B cell (primary cell): ENCODE measurements at regions of chr7 and their contacts with region 1.

Region 1: DNA sequence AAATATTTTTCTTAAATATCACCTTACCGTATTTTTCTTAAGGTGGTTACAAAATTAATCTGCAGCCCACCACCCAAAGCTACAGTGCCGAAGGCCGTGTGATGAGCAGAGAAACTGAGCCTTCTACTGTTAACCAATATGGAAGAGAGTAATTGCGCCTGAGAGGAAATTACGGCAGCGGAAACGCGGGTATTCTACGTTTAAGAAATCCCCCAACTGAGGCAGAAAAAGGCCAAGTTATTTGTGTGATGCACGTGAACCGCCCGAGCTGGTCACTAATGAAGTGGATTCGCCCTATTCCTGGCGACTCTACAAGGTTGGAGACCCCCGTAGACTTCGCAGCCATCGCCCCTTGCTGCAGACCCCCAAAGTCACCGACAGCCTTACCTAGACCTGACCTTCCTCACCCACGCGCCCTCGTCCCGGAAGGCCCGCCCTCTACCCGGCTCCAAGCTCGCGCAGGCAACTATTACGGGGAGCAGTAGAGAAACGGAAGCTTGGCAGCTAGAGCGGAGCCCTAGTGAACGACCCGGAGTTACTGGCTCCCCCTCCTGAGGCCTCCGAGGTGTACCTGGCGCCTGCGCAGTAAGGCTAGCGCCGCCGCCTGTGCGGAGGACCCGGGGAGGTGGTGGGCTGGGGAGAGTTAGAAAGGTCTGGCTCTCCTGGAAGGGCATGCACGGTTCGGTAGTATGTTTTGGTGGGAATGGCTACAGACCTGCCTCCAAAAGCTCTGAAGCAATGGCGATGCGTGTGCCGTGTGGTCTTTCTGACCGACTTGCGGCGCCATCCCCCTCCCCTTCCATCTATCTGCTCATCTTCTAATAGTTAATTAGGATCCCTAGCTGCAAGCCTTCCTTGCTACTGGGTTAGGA is at the start of gene MRPS33:
- DNase-seq: peak; percentile 98
- ATAC-seq: peak; percentile 98
- H3K4me3 ChIP-seq: peak within 1 kb of the TSS; percentile 64 to 83 (median 74)
- H3K4me3 Mint-ChIP-seq: peak within 1 kb of the TSS; percentile 100
- H3K27ac ChIP-seq: peak within 1 kb of the TSS; percentile 96 to 99
- H3K27ac Mint-ChIP-seq: peak within 1 kb of the TSS; percentile 100
- H3K4me1 ChIP-seq: peaks cover 10 to 11% of the 10 kb centered on the region in 2 donors
- H3K4me1 Mint-ChIP-seq: peaks cover 27% of the 10 kb centered on the region
- H3K27me3 ChIP-seq: peaks cover 0 to 7% (median 0%) of the 10 kb centered on the region in 4 experiments
- H3K27me3 Mint-ChIP-seq: peaks cover 16% of the 10 kb centered on the region
- CTCF ChIP-seq: peak; percentile 69
- total RNA-seq, gene MRPS33: 25.3 and 30.1 TPM in 2 replicates

Region 2: GRCh38 chr7:140230861-140231770 is 783.6 kb before region 1 on chr7:
- CTCF ChIA-PET with region 1: no interaction called
- POLR2A ChIA-PET with region 1: no interaction called
- intact Hi-C with region 1: loop called (anchors 10 kb)
- DNase-seq: peak; percentile 69
- ATAC-seq: peak; percentile 10
- H3K4me3 ChIP-seq: peak overlapping the region; percentile 57 to 80 (median 64)
- H3K4me3 Mint-ChIP-seq: peak overlapping the region; percentile 90
- H3K27ac ChIP-seq: peak overlapping the region; percentile 93 to 96
- H3K27ac Mint-ChIP-seq: peak overlapping the region; percentile 99
- H3K4me1 ChIP-seq: peaks cover 49 to 74% of the 10 kb centered on the region in 2 donors
- H3K4me1 Mint-ChIP-seq: peaks cover 58% of the 10 kb centered on the region
- H3K27me3 ChIP-seq: no peaks in the 10 kb centered on the region
- H3K27me3 Mint-ChIP-seq: no peaks in the 10 kb centered on the region
- CTCF ChIP-seq: no peak

Region 3: DNA sequence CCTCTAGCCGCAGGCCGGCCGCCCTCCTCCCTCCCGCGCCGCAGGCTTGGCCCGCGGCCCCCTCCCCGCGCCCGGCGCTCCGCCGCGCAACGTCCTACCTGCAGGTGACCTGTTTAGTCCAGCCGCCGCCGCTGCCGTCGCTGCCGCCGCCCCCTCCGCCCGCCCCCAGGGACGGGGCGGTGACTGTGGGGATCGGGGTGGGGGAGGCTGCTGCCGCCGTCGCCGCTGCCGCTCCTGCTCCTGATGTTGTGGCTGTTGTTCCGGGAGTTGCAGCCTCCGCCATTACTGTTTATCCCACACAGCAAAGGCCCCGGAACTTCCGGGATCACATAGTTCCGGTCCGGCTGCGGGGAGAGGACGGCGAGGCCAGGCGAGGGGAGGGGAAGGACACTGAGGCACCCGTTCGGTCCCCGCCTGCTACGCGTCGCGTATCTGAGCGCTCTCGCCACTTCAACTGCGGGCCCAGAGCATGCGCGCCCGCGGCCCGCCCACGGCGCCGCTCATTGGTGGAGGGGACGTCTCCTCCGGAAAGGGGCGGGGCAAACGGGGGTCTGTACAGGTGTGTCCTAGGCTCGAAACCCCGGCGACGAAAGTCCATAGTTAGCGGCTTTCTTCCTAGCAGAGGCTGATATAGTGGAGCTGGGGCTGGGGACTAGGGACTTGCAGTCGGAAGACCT is 535.6 kb before region 1 on chr7 and contains the start of gene MKRN1:
- CTCF ChIA-PET with region 1: interaction called, 4 read pairs
- POLR2A ChIA-PET with region 1: no interaction called
- intact Hi-C with region 1: loop called (anchors 1 kb)
- DNase-seq: peak; percentile 94
- ATAC-seq: peak; percentile 88
- H3K4me3 ChIP-seq: peak within 1 kb of the TSS; percentile 90 to 96 (median 93)
- H3K4me3 Mint-ChIP-seq: peak within 1 kb of the TSS; percentile 91
- H3K27ac ChIP-seq: peak within 1 kb of the TSS; percentile 83 to 86
- H3K27ac Mint-ChIP-seq: peak within 1 kb of the TSS; percentile 99
- H3K4me1 ChIP-seq: peaks cover 26 to 27% of the 10 kb centered on the region in 2 donors
- H3K4me1 Mint-ChIP-seq: peaks cover 31% of the 10 kb centered on the region
- H3K27me3 ChIP-seq: no peaks in the 10 kb centered on the region
- H3K27me3 Mint-ChIP-seq: peaks cover 2% of the 10 kb centered on the region
- CTCF ChIP-seq: no peak
- total RNA-seq, gene MKRN1: 146 and 147 TPM in 2 replicates

Region 4: DNA sequence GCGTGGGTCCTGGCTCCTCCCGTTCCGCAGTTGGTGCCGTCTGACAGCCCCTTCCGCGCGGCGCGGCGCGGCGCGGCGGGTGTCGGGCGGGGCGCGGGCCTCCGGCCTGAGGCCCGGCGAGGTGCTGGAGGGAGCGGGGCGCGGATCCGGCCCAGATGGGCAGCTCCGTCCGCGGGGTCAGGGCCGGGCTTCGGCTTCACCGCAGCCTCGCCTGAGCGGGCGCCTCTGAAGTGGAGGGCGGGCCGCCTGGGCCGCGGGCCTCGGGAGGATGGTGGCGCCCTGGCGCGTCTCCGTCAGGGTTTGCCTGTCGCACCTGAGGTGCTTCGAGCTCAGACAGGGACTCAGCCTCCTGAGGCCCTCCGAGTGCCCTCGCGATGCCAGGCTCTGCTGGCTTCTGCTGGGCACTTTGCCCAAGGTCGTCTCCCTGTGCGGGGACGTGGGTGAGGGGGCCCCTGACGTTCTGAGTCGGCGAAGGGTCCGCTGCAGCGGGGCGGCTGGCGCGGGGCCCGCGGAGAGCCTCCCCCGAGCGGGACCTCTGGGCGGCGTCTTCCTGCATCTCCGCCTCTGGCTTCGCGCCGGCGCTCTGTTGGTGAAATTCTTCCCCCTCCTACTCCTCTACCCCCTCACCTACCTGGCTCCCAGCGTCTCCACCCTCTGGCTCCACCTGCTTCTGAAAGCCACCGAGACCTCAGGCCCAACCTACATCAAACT is 341.5 kb before region 1 on chr7:
- CTCF ChIA-PET with region 1: no interaction called
- POLR2A ChIA-PET with region 1: interaction called, 4 read pairs
- intact Hi-C with region 1: loop called (anchors 2 kb)
- DNase-seq: peak; percentile 83
- ATAC-seq: peak; percentile 55
- H3K4me3 ChIP-seq: peak overlapping the region; percentile 4 to 76 (median 70)
- H3K4me3 Mint-ChIP-seq: peak overlapping the region; percentile 87
- H3K27ac ChIP-seq: peak overlapping the region; percentile 48 to 79
- H3K27ac Mint-ChIP-seq: peak overlapping the region; percentile 91
- H3K4me1 ChIP-seq: peaks cover 46 to 54% of the 10 kb centered on the region in 2 donors
- H3K4me1 Mint-ChIP-seq: peaks cover 52% of the 10 kb centered on the region
- H3K27me3 ChIP-seq: no peaks in the 10 kb centered on the region
- H3K27me3 Mint-ChIP-seq: no peaks in the 10 kb centered on the region
- CTCF ChIP-seq: no peak

Region 5: DNA sequence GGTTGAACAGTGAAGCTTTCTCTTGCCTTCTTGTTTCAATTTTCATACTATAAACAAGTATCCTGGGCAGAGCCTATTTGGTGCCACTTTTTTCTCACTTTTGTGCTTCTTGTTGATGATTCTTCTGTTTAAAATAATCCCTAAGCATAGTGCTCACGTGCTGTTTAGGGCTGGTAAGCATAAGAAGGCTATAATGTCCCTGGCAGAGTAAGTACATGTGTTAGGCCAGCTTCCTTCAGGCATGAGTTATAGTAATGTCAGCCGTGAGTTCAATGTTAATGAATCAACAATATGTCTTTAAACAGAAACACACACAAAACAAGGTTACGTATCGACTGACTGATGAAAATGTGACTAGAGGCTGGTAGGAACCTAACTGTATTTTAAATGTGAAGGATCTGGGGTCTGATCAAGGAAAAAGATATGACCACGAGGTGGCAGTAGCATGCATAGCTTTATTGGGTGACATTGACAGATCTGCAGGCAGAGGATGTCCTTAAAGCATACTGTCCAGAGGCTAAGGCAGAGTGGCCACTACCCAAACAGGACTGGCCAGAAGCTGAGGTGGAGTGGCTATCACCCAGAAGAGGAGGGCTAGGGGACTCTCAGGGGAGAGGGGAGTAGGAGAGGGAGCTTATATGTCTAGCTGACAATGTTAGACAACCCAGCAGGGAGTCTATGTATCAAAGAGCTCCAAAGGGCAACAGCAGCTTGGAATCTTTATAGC is 203.8 kb before region 1 on chr7:
- CTCF ChIA-PET with region 1: interaction called, 254 read pairs
- POLR2A ChIA-PET with region 1: interaction called, 5 read pairs
- intact Hi-C with region 1: loop called (anchors 1 kb)
- DNase-seq: peak; percentile 82
- ATAC-seq: peak; percentile 73
- H3K4me3 ChIP-seq: no peak overlapping the region
- H3K4me3 Mint-ChIP-seq: no peak overlapping the region
- H3K27ac ChIP-seq: no peak overlapping the region
- H3K27ac Mint-ChIP-seq: peak overlapping the region; percentile 17
- H3K4me1 ChIP-seq: no peaks in the 10 kb centered on the region
- H3K4me1 Mint-ChIP-seq: peaks cover 1% of the 10 kb centered on the region
- H3K27me3 ChIP-seq: no peaks in the 10 kb centered on the region
- H3K27me3 Mint-ChIP-seq: no peaks in the 10 kb centered on the region
- CTCF ChIP-seq: peak; percentile 82

Region 6: GRCh38 chr7:141533149-141533949 is 518.6 kb after region 1 on chr7:
- CTCF ChIA-PET with region 1: no interaction called
- POLR2A ChIA-PET with region 1: no interaction called
- intact Hi-C with region 1: loop called (anchors 10 kb)
- DNase-seq: peak; percentile 67
- ATAC-seq: peak; percentile 63
- H3K4me3 ChIP-seq: no peak overlapping the region
- H3K4me3 Mint-ChIP-seq: no peak overlapping the region
- H3K27ac ChIP-seq: no peak overlapping the region
- H3K27ac Mint-ChIP-seq: no peak overlapping the region
- H3K4me1 ChIP-seq: no peaks in the 10 kb centered on the region
- H3K4me1 Mint-ChIP-seq: no peaks in the 10 kb centered on the region
- H3K27me3 ChIP-seq: peaks cover 0 to 16% (median 7%) of the 10 kb centered on the region in 4 experiments
- H3K27me3 Mint-ChIP-seq: peaks cover 37% of the 10 kb centered on the region
- CTCF ChIP-seq: peak; percentile 95

Region 7: GRCh38 chr7:141701489-141702046 is 686.8 kb after region 1 on chr7:
- CTCF ChIA-PET with region 1: interaction called, 3 read pairs
- POLR2A ChIA-PET with region 1: no interaction called
- intact Hi-C with region 1: loop called (anchors 1 kb)
- DNase-seq: peak; percentile 83
- ATAC-seq: peak; percentile 86
- H3K4me3 ChIP-seq: peak overlapping the region in 4 of 5 experiments; percentile 47 to 78 (median 64)
- H3K4me3 Mint-ChIP-seq: peak overlapping the region; percentile 84
- H3K27ac ChIP-seq: peak overlapping the region; percentile 52 to 87
- H3K27ac Mint-ChIP-seq: peak overlapping the region; percentile 79
- H3K4me1 ChIP-seq: peaks cover 35 to 38% of the 10 kb centered on the region in 2 donors
- H3K4me1 Mint-ChIP-seq: peaks cover 56% of the 10 kb centered on the region
- H3K27me3 ChIP-seq: no peaks in the 10 kb centered on the region
- H3K27me3 Mint-ChIP-seq: no peaks in the 10 kb centered on the region
- CTCF ChIP-seq: no peak